ENCODE measurements at regions of chr4 and their contacts with region 1.

Region 1: DNA sequence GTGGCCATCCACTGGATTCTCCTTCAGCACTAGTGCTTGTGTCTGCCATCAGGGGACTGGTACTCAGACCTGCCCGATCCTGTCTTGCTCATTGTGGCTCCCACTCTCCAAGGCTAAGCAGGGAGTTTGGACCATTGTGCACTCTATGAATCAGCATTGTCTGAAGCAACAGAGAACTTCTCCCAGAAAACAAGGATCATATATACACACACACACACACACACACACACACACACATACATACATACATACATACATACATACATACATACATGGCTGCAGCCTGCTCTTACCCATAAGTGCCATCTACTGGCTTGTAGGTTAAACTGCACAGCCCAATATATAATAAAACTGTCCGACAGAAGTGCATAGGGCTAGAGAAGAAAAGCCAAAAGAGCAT is 345.3 kb upstream of the LCORL start:
- DNase-seq: peak; percentile 17
- H3K4me3 ChIP-seq: no peak overlapping the region
- H3K27ac ChIP-seq: no peak overlapping the region
- H3K4me1 ChIP-seq: no peaks in the 10 kb centered on the region
- H3K27me3 ChIP-seq: no peaks in the 10 kb centered on the region
- CTCF ChIP-seq: peak; percentile 58 to 64

Region 2: DNA sequence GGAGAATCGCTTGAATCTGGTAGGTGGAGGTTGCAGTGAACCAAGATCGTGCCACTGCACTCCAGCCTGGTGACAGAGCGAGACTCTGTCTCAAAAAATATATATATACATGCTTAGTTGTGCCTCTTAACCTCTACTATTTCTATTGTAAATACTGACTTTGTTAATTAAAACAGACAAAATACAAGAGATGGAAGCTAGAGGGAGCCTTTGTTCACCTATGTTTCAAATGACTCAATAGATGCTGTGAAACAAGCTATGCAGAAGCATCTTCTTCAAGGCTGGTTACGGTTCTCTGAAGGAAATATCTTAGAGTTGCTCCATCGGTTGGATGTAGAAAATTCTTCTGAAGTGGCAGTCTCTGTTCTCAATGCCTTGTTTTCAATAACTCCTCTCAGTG is 549.9 kb before region 1 on chr4:
- CTCF ChIA-PET with region 1: no interaction called
- dilution Hi-C with region 1: no loop called
- in situ Hi-C with region 1: no loop called
- intact Hi-C with region 1: loop called (anchors 1 kb)
- DNase-seq: peak; percentile 53
- H3K4me3 ChIP-seq: no peak overlapping the region
- H3K27ac ChIP-seq: no peak overlapping the region
- H3K4me1 ChIP-seq: peaks cover 9% of the 10 kb centered on the region
- H3K27me3 ChIP-seq: no peaks in the 10 kb centered on the region
- CTCF ChIP-seq: peak; percentile 47 to 55

Region 3: DNA sequence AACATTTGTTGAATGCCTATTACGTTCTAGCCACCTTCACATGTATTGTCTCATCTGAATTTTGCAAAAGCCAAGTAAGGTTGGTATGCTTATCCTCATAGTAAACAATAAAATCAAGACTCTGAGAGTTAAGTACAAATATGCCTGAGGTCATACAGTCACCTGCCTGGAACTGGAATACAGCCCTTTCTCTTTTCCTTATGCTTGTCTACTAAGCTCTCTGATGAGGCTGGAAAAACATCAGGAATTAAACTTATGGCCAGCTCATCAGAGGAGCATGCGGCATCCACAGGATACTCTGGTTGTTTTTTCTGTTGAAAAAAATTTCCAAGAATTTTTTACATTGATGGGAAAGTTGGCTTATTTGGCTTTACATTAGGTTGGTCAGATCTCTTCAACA is 520.6 kb before region 1 on chr4:
- CTCF ChIA-PET with region 1: no interaction called
- dilution Hi-C with region 1: no loop called
- in situ Hi-C with region 1: loop called in 1 of 2 experiments (anchors 25 kb)
- intact Hi-C with region 1: no loop called
- DNase-seq: no peak
- H3K4me3 ChIP-seq: no peak overlapping the region
- H3K27ac ChIP-seq: no peak overlapping the region
- H3K4me1 ChIP-seq: no peaks in the 10 kb centered on the region
- H3K27me3 ChIP-seq: no peaks in the 10 kb centered on the region
- CTCF ChIP-seq: no peak

Region 4: GRCh38 chr4:17934286-17934685 is 432.6 kb before region 1 on chr4:
- CTCF ChIA-PET with region 1: no interaction called
- dilution Hi-C with region 1: no loop called
- in situ Hi-C with region 1: no loop called
- intact Hi-C with region 1: loop called (anchors 1 kb)
- DNase-seq: no peak
- H3K4me3 ChIP-seq: no peak overlapping the region
- H3K27ac ChIP-seq: no peak overlapping the region
- H3K4me1 ChIP-seq: no peaks in the 10 kb centered on the region
- H3K27me3 ChIP-seq: no peaks in the 10 kb centered on the region
- CTCF ChIP-seq: peak in 1 of 2 donors; percentile 13

Region 5: GRCh38 chr4:18021722-18022571 is 344.9 kb before region 1 on chr4 and contains the start of gene LCORL:
- CTCF ChIA-PET with region 1: no interaction called
- dilution Hi-C with region 1: no loop called
- in situ Hi-C with region 1: no loop called
- intact Hi-C with region 1: loop called (anchors 10 kb)
- DNase-seq: peak; percentile 96
- H3K4me3 ChIP-seq: peak within 1 kb of the TSS; percentile 61 to 99 (median 94)
- H3K27ac ChIP-seq: peak within 1 kb of the TSS; percentile 83
- H3K4me1 ChIP-seq: peaks cover 7% of the 10 kb centered on the region
- H3K27me3 ChIP-seq: no peaks in the 10 kb centered on the region
- CTCF ChIP-seq: no peak
- total RNA-seq, gene LCORL: 11.3 to 14.6 TPM

Region 6: DNA sequence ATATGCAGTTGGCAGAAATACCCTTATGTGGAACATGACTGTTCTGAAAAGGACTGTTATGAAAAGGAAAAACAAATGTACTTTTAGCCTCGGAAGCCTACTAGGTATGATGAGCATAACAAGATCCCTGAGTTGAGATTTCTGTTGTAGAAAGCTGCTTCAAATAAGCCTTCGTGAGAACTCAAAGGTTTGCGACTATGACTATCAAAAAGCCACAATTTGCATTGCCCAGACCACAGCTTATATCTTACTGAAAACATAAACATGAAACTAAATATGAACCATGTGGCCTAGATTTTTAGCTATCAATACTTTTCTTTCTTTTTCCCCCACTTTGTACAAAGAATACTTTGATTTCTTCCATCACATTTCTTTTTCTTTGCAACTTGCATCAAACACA is 52.9 kb after region 1 on chr4:
- CTCF ChIA-PET with region 1: no interaction called
- dilution Hi-C with region 1: no loop called
- in situ Hi-C with region 1: no loop called
- intact Hi-C with region 1: no loop called
- DNase-seq: no peak
- H3K4me3 ChIP-seq: no peak overlapping the region
- H3K27ac ChIP-seq: no peak overlapping the region
- H3K4me1 ChIP-seq: no peaks in the 10 kb centered on the region
- H3K27me3 ChIP-seq: no peaks in the 10 kb centered on the region
- CTCF ChIP-seq: no peak

Region 7: DNA sequence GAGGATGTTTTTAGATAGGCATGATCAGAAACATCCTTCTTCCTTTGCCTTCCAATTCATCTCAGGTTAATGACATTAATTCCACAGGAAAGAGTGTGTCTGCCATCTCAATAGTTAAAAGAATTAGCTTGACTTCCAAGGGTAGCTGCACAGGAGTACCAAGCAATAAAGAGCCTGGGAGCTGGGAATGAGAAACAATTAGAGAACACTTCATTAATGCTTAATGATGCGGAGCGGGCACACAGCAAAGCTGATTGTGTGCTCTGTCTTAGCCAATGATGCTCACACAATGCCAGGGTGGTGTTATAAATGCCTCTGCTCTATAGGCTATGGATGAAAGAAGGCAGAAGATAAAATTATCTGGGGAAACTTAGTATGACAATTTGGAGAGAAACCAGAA is 707.1 kb after region 1 on chr4:
- CTCF ChIA-PET with region 1: no interaction called
- dilution Hi-C with region 1: no loop called
- in situ Hi-C with region 1: no loop called
- intact Hi-C with region 1: no loop called
- DNase-seq: no peak
- H3K4me3 ChIP-seq: no peak overlapping the region
- H3K27ac ChIP-seq: no peak overlapping the region
- H3K4me1 ChIP-seq: no peaks in the 10 kb centered on the region
- H3K27me3 ChIP-seq: no peaks in the 10 kb centered on the region
- CTCF ChIP-seq: no peak